Activated T-helper 1 cell treated with anti-CD3 and anti-CD28 coated beads, Interleukin-12 subunit alpha, Interleukin-12 subunit beta, Interleukin-2, Interleukin-4 antibody, amounts not matched to agents 30 ng/mL and 10 ng/mL and 1 ng/mL, durations not matched to agents 14 hours and 24 hours and 36 hours (primary cell): ENCODE measurements at regions of chr7 and their contacts with region 1.

Region 1: GRCh38 chr7:27784393-27785053 is 44.6 kb downstream of the TAX1BP1 start:
- DNase-seq: peak; percentile 2
- H3K4me3 Mint-ChIP-seq: no peak overlapping the region
- H3K27ac Mint-ChIP-seq: peak overlapping the region; percentile 20
- H3K4me1 Mint-ChIP-seq: peaks cover 24% of the 10 kb centered on the region
- H3K27me3 Mint-ChIP-seq: no peaks in the 10 kb centered on the region

Region 2: GRCh38 chr7:27611043-27611442 is 173.5 kb before region 1 on chr7:
- intact Hi-C with region 1: no loop called
- DNase-seq: no peak
- H3K4me3 Mint-ChIP-seq: no peak overlapping the region
- H3K27ac Mint-ChIP-seq: no peak overlapping the region
- H3K4me1 Mint-ChIP-seq: no peaks in the 10 kb centered on the region
- H3K27me3 Mint-ChIP-seq: peaks cover 2% of the 10 kb centered on the region

Region 3: GRCh38 chr7:27662490-27663205 is 121.9 kb before region 1 on chr7 and contains the start of gene HIBADH:
- intact Hi-C with region 1: loop called (anchors 1 kb)
- DNase-seq: peak; percentile 96
- H3K4me3 Mint-ChIP-seq: peak within 1 kb of the TSS; percentile 86
- H3K27ac Mint-ChIP-seq: peak within 1 kb of the TSS; percentile 81
- H3K4me1 Mint-ChIP-seq: peaks cover 30% of the 10 kb centered on the region
- H3K27me3 Mint-ChIP-seq: no peaks in the 10 kb centered on the region
- total RNA-seq, gene HIBADH: 21.0 and 21.2 TPM in 2 replicates

Region 4: GRCh38 chr7:27689591-27690164 is 94.8 kb before region 1 on chr7:
- intact Hi-C with region 1: loop called (anchors 1 kb)
- DNase-seq: no peak
- H3K4me3 Mint-ChIP-seq: no peak overlapping the region
- H3K27ac Mint-ChIP-seq: no peak overlapping the region
- H3K4me1 Mint-ChIP-seq: no peaks in the 10 kb centered on the region
- H3K27me3 Mint-ChIP-seq: peaks cover 6% of the 10 kb centered on the region

Region 5: GRCh38 chr7:27739909-27740448 is 44.5 kb before region 1 on chr7 and contains the start of gene TAX1BP1:
- intact Hi-C with region 1: loop called (anchors 2 kb)
- DNase-seq: peak; percentile 93
- H3K4me3 Mint-ChIP-seq: peak within 1 kb of the TSS; percentile 92
- H3K27ac Mint-ChIP-seq: peak within 1 kb of the TSS; percentile 98
- H3K4me1 Mint-ChIP-seq: peaks cover 41% of the 10 kb centered on the region
- H3K27me3 Mint-ChIP-seq: peaks cover 2% of the 10 kb centered on the region
- total RNA-seq, gene TAX1BP1: 88.6 and 90.9 TPM in 2 replicates

Region 6: DNA sequence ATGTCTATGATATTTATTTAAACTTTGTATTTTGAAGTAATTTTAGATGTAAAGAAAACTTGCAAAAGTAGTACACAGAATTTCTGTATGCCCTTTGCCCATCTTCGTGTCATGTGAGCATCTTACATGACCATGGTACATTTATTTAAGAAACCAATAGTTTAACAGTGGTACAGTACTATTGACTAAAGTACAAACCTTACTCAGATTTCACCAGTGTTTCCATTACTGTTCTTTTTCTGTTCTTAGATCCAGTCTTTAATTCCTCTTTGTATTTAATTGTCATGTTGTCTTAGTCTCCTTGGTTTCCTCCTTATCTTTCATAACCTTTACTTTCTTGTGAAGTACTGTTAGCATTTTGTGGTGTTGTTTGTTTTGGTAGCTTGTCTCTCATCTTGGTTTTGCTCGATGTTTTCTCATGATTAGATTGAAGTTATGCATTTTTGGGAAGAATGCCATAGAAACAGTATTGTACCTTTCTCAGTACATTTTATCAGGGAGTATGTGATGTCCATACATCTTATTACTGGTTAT is 20.5 kb before region 1 on chr7:
- intact Hi-C with region 1: loop called (anchors 2 kb)
- DNase-seq: no peak
- H3K4me3 Mint-ChIP-seq: no peak overlapping the region
- H3K27ac Mint-ChIP-seq: no peak overlapping the region
- H3K4me1 Mint-ChIP-seq: peaks cover 13% of the 10 kb centered on the region
- H3K27me3 Mint-ChIP-seq: no peaks in the 10 kb centered on the region

Region 7: DNA sequence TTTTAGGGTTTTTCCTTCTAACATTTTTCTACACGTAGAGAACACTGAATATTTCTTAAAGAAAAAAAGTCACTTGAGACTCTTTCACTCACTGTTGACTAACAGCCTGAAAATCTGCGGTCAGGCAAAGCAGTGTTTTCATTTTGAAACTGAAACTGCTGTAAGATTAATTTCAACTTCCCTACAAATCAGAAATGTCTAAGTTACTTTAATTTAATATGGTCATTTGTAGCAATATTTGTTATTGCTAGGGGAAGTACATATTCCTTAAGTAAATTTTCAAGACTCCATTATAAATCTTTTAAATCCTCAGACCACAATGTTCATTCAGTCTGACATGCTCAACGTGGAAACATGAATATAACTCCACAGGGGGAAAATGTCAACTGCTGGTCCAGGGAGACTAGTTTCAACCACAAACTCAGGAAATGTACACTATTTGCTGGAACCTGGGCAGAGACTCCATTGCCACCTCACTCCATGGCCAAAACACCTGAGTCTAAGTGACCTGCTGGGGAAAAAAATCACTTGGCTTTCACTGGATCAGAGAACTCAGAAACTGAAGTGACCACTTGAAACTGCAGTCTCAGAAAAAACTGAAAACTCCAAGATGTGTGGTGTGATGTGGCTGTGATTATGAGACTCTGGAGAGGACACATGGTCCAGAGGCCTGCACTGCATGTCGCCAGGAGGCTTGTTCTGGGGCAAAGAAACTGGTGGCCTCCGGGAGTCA is 116.7 kb after region 1 on chr7:
- intact Hi-C with region 1: loop called (anchors 1 kb)
- DNase-seq: peak; percentile 32
- H3K4me3 Mint-ChIP-seq: no peak overlapping the region
- H3K27ac Mint-ChIP-seq: no peak overlapping the region
- H3K4me1 Mint-ChIP-seq: peaks cover 44% of the 10 kb centered on the region
- H3K27me3 Mint-ChIP-seq: peaks cover 9% of the 10 kb centered on the region

Region 8: DNA sequence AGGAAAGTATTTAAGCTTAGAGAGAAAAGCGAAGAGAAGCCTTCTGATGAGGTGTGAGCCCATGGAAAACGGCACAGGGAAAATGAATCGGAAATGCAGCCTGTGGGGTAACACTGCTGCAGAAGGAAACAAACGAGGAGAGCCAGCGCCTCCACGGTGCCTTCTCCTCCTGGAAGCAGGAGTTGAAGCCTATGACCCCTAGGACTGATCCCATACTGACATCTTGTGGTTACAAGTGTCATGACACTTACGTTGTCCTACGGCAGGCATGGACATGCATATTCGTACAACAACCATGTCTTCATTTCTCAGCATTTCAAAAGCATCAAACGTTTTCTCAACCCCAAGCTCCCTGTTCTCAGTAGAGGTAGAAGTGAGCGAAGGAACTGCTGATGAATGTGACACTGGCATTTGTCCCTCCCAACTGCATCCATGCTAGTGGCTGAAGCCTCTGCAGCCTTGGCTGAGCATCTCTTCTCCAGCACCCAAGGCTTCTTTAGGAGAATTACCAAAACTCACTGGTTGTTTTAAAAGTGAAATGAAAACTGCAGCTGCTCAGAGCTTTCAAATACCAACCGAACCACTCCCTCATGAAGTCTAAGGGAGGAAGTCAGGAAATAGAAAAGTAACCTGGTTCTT is 235.9 kb after region 1 on chr7:
- intact Hi-C with region 1: loop called (anchors 5 kb)
- DNase-seq: peak; percentile 26
- H3K4me3 Mint-ChIP-seq: no peak overlapping the region
- H3K27ac Mint-ChIP-seq: no peak overlapping the region
- H3K4me1 Mint-ChIP-seq: peaks cover 7% of the 10 kb centered on the region
- H3K27me3 Mint-ChIP-seq: peaks cover 7% of the 10 kb centered on the region